KBM-7 (cell line): ENCODE measurements at regions of chr1 and their contacts with region 1.

Region 1: GRCh38 chr1:179809506-179810366 is 66.6 kb downstream of the FAM163A start:
- DNase-seq: peak; percentile 83

Region 2: DNA sequence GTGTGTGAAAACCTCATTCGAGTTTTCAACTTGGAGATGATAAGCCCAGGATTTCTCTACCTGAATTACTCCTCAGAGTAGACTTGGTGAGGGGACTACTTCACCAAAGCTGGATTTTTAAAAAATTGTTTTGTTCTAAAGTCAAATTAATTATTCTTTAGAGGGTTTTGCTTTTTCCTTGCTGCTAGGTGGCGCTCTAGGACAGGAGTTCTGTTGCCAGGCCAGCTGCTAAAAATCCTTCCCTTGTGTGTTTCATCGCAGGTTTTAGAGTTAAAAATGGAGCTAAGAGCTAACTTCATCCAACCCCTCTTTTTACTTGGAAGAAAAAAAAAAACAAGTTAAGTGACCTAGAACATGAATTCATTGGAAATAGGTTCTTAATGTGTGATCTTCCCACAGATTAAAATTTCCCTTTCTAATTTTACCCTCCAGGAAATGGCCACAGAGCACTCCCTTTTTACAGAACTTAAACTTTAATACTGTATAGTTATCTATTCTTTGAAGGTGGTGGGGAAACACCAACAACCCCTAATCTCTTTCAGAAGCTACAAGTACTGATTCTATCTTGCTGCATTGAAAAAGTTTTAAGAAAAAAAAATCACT is 103.3 kb before region 1 on chr1:
- in situ Hi-C with region 1: loop called (anchors 25 kb)
- DNase-seq: peak; percentile 47

Region 3: GRCh38 chr1:179856296-179856695 is 46.6 kb after region 1 on chr1:
- in situ Hi-C with region 1: no loop called
- DNase-seq: no peak